ENCODE measurements at regions of chr15 and their contacts with region 1.

Region 1: DNA sequence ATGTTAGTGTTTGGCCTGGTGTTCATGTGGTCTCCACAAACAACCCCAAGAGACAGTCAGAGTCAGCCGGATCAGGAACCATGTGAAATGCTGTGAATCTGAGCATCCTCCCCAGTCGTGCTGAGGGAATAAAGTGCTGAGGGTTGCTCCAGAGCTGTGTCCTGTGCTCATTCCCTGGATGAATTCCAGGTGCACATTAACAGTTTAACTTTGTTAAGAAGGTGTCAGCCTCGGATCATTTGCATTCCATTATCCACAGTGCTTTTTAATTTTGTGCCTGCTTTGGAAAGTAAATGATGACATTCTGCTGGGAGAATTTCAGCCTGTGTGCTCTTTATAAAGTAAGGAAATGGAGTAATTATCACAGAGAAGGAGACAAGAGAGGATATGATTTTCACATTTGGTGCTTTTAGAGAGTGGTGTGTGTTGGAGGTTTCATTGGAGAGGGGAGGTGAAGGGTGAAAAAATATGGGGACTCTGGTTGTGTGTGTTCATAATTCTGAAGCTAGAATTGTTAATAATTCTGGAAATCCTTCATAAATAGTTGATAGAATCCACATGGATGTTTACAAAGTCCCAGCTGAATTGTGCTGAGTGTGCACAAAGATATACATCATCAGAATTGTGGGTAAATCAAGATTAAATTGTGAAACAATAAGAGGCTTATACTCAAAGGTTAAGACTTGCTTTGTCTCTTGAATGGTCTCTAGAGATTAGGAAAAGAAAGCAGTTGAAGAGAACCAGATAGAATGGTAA is 621.4 kb downstream of the AGBL1 start:
- DNase-seq: no peak

Region 2: DNA sequence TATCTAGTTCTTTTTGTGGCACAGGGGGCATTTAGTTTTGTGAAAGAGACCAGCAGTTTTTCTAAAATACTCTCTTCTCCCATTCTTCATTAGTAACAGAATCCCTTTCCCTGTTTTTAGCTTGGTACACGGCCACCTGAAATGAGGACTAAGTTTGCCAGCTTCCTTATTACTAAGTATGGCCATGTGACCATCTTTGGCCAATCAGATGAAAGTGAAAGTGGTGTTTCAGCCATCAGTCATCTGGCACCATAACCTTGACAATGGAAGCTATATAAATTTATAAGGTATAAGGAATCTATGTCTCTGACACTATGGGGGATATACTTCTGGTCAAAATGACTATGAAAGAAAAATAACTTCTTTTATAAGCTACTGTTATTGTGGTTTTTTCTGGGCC is 50.9 kb before region 1 on chr15:
- intact Hi-C with region 1: no loop called
- DNase-seq: no peak

Region 3: DNA sequence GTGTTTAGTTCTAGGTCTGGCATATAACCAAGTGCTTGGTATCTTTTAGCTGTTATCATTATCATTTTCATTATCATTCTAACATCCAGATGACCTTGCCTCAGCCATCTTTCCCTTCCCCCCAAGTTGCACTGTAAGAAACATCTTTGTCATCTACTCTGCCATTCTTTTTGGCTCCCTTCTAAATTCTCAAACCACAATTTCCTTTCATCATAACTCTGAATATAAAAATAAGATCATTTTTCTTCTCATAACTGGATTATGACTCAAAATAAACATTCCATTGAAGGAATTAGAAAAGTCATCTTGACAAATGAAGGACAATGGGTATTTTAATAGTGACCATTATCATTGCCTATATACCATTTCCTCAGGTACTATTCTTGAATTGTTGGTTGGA is 164.9 kb after region 1 on chr15:
- intact Hi-C with region 1: loop called in 1 of 2 experiments (anchors 5 kb)
- DNase-seq: no peak